ENCODE measurements at regions of chr22 and their contacts with region 1.

Region 1: GRCh38 chr22:36331306-36331911 is 56.4 kb downstream of the MYH9 start:
- DNase-seq: peak in 1 of 2 experiments; percentile 65
- H3K4me3 ChIP-seq: no peak overlapping the region
- H3K27ac ChIP-seq: peak overlapping the region; percentile 98
- H3K4me1 ChIP-seq: peaks cover 9 to 52% (median 33%) of the 10 kb centered on the region in 4 experiments
- H3K27me3 ChIP-seq: no peaks in the 10 kb centered on the region
- CTCF ChIP-seq: no peak
- EP300 ChIP-seq: peak in 1 of 2 experiments; percentile 84; a peak in 1 of 3 replicates
- POLR2A ChIP-seq: peak in 1 of 2 experiments; percentile 59; a peak in 2 of 3 replicates
- RAD21 ChIP-seq: no peak

Region 2: DNA sequence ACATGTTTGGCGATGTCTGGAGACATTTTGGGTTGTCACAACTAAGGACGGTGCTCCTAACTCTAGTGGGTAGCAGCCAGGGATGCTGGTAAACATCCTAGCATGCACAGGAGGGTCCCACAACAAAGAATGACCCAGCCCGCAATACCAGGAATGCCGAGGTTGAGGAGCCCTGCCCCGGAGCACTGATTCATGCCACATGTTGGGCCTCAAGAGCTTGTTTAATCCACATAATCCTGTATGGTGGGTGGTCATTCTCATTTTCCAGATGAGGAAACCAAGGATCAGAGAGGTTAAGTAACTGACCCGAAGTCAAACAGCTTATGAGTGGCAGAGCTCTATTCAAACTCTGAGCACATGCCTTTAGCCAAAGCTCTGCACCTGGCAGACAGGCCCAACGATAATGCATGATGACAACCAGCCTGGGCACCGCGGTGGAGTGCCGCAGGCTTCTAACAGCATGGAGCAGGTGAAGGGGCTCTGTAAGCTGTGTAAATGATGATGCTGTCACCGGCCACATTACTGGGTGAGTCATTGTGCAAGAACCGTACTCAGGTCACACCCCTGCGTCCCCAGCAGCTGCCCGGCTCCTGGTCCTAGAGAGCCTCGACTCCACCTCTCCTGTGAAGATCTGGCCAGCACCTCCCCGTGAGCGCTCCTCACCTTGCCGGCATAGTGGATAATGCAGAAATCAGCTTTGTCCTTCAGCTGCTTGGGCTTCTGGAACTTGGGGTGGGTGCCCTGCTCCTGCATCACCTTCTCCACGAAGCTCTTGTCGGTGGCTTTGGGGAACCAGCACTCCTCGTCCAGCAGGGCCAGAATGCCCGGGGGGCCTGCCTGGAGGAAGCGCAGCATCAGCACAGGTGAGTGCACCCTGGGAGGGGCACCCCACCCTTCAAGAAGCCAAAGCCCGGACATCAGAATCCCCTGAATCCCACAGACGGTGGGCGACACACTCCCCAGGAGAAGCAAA is 19.7 kb before region 1 on chr22:
- CTCF ChIA-PET with region 1: interaction called, 15 read pairs
- POLR2A ChIA-PET with region 1: interaction called, 21 read pairs
- DNase-seq: no peak
- H3K4me3 ChIP-seq: no peak overlapping the region
- H3K27ac ChIP-seq: no peak overlapping the region
- H3K4me1 ChIP-seq: no peaks in the 10 kb centered on the region
- H3K27me3 ChIP-seq: no peaks in the 10 kb centered on the region
- CTCF ChIP-seq: no peak
- EP300 ChIP-seq: no peak
- POLR2A ChIP-seq: no peak
- RAD21 ChIP-seq: no peak

Region 3: GRCh38 chr22:36365020-36365411 is 33.6 kb after region 1 on chr22:
- CTCF ChIA-PET with region 1: interaction called, 9 read pairs
- POLR2A ChIA-PET with region 1: interaction called, 13 read pairs
- DNase-seq: no peak
- H3K4me3 ChIP-seq: no peak overlapping the region
- H3K27ac ChIP-seq: 0 out of 2 replicates have a peak overlapping the region, but pooled peaks have one; percentile 21
- H3K4me1 ChIP-seq: peaks cover 48 to 71% (median 61%) of the 10 kb centered on the region in 4 experiments
- H3K27me3 ChIP-seq: no peaks in the 10 kb centered on the region
- CTCF ChIP-seq: no peak
- EP300 ChIP-seq: no peak
- POLR2A ChIP-seq: no peak
- RAD21 ChIP-seq: no peak

Region 4: GRCh38 chr22:36409911-36410756 is 78.7 kb after region 1 on chr22:
- CTCF ChIA-PET with region 1: interaction called, 5 read pairs
- POLR2A ChIA-PET with region 1: interaction called, 16 read pairs
- DNase-seq: peak; percentile 90 to 96
- H3K4me3 ChIP-seq: peak overlapping the region; percentile 41 to 63 (median 53)
- H3K27ac ChIP-seq: peak overlapping the region; percentile 96
- H3K4me1 ChIP-seq: peaks cover 0 to 9% (median 7%) of the 10 kb centered on the region in 4 experiments; a peak in 5 of 7 replicates
- H3K27me3 ChIP-seq: no peaks in the 10 kb centered on the region
- CTCF ChIP-seq: no peak
- EP300 ChIP-seq: no peak; a peak in 1 of 3 replicates
- POLR2A ChIP-seq: peak; percentile 91 to 96
- RAD21 ChIP-seq: 0 out of 4 replicates have a peak, but pooled peaks of 1 of the 2 experiments have one; percentile 0

Region 5: GRCh38 chr22:36470162-36470993 is 139.0 kb after region 1 on chr22:
- CTCF ChIA-PET with region 1: interaction called, 15 read pairs
- POLR2A ChIA-PET with region 1: interaction called, 14 read pairs
- DNase-seq: peak; percentile 65 to 83
- H3K4me3 ChIP-seq: no peak overlapping the region
- H3K27ac ChIP-seq: peak overlapping the region; percentile 30; the same call in 1 of the 2 replicates
- H3K4me1 ChIP-seq: peaks cover 0 to 2% (median 0%) of the 10 kb centered on the region in 4 experiments; a peak in 2 of 7 replicates
- H3K27me3 ChIP-seq: no peaks in the 10 kb centered on the region
- CTCF ChIP-seq: peak; percentile 85 to 96 (median 95)
- EP300 ChIP-seq: no peak
- POLR2A ChIP-seq: 0 out of 3 replicates have a peak, but pooled peaks of 1 of the 2 experiments have one; percentile 28
- RAD21 ChIP-seq: peak; percentile 98 to 99

Region 6: DNA sequence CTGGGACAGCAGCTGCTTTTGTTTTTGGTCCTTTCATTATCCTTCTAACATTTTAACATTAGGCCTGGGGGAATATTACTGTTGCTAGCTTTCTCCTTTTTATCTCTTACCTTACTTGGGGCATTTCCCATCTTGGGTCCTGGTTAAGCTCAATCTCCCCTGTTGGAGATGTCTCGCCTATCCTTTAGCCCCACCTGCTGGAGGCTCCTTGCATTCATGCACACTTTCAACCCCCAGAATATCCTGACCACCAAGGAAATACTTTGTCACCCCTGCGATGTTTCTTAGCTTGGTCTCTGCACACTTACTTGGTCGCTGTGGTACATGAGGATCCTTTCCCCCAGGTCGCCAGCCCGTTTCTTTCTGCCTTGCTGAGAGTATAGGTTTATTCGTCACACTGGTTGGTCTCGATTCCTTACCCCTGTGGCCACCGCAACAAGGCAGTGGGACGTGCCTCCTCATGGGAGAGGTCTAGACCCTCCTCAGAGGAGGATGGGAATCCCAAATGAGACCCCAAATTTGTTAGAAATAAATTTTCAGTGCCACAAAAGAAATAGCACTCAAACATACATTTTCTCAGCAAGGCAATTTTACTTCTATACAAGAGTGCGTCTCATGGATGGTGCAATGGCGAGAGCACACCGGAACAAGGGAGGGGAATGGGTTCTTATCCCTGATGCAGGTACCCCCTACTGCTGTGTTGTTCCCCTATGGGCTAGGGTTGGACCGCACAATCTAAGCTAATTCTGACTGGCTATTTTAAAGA is 155.4 kb after region 1 on chr22:
- CTCF ChIA-PET with region 1: interaction called, 29 read pairs
- POLR2A ChIA-PET with region 1: interaction called, 13 read pairs
- DNase-seq: peak in 1 of 2 experiments; percentile 85
- H3K4me3 ChIP-seq: no peak overlapping the region
- H3K27ac ChIP-seq: no peak overlapping the region
- H3K4me1 ChIP-seq: no peaks in the 10 kb centered on the region; a peak in 1 of 7 replicates
- H3K27me3 ChIP-seq: peaks cover 0 to 7% (median 5%) of the 10 kb centered on the region in 4 experiments; a peak in 5 of 7 replicates
- CTCF ChIP-seq: peak; percentile 70 to 86 (median 83)
- EP300 ChIP-seq: no peak
- POLR2A ChIP-seq: no peak
- RAD21 ChIP-seq: peak; percentile 83 to 91

Measured in H1 (cell line).